ENCODE measurements at regions of chr9 and their contacts with region 1.

Region 1: GRCh38 chr9:131491001-131491710 is 11.6 kb upstream of the POMT1 start:
- DNase-seq: no peak
- ATAC-seq: no peak
- H3K4me3 ChIP-seq: no peak overlapping the region
- H3K27ac ChIP-seq: no peak overlapping the region
- H3K4me1 ChIP-seq: no peaks in the 10 kb centered on the region
- H3K27me3 ChIP-seq: no peaks in the 10 kb centered on the region
- CTCF ChIP-seq: no peak
- EP300 ChIP-seq: no peak
- POLR2A ChIP-seq: no peak
- RAD21 ChIP-seq: no peak

Region 2: GRCh38 chr9:130927995-130928900 is 562.9 kb before region 1 on chr9:
- CTCF ChIA-PET with region 1: no interaction called
- POLR2A ChIA-PET with region 1: no interaction called
- in situ Hi-C with region 1: no loop called
- intact Hi-C with region 1: no loop called
- DNase-seq: peak in 3 of 4 experiments; percentile 64 to 73 (median 66)
- ATAC-seq: no peak
- H3K4me3 ChIP-seq: no peak overlapping the region
- H3K27ac ChIP-seq: no peak overlapping the region
- H3K4me1 ChIP-seq: peaks cover 0 to 52% of the 10 kb centered on the region in 2 experiments; a peak in 2 of 5 replicates
- H3K27me3 ChIP-seq: peaks cover 95 to 100% of the 10 kb centered on the region in 2 experiments
- CTCF ChIP-seq: no peak
- EP300 ChIP-seq: no peak
- POLR2A ChIP-seq: no peak
- RAD21 ChIP-seq: no peak

Region 3: DNA sequence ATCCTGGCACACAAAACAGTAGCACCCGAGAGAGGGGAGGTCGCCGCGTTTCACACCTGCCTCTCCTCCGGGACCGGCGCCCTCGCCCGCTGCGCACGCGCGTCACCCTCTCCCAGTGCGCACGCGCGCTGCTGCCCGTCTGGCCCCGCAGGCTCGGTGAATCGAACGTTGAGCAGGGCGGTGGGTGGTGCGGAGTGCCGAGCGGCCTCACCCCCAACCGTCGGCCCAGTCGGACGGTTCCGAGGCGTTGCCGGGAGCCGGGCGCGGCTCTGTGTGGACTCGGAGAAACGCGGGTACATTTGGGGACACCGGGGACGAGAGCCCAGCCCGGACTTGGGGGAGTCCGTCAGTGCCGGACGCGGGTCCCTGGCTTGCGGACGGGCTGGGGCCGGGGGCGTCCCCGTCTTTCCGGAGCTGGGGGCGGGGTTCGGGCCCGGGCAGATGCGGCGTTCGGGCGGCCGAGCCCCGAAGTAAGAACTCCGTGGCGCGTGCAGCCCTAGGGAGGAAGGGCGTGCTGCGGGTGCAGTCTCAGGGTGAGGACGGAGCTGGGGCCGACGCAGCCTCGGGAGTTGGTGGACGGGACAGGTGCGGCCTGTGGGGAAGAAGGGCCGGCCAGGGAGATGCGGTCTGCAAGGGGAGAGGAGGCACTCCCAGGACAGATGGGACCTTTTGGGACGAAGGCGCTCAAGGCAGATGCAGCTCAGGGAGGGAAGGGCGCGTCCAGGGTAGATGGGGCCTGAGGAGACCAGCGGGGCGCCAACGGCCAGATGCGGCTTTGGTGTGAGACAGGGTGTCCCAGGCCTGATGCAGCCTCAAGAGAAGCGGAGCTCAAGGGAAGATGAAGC is 11.8 kb after region 1 on chr9 and contains the start of gene POMT1:
- CTCF ChIA-PET with region 1: no interaction called
- POLR2A ChIA-PET with region 1: interaction called, 12 read pairs
- in situ Hi-C with region 1: no loop called
- intact Hi-C with region 1: no loop called
- DNase-seq: peak; percentile 93 to 99 (median 98)
- ATAC-seq: peak; percentile 91
- H3K4me3 ChIP-seq: peak within 1 kb of the TSS; percentile 89
- H3K27ac ChIP-seq: peak within 1 kb of the TSS; percentile 62
- H3K4me1 ChIP-seq: peaks cover 4 to 25% of the 10 kb centered on the region in 2 experiments; a peak in 4 of 5 replicates
- H3K27me3 ChIP-seq: no peaks in the 10 kb centered on the region
- CTCF ChIP-seq: 0 out of 6 replicates have a peak, but pooled peaks of 1 of the 3 experiments have one; percentile 0
- EP300 ChIP-seq: no peak
- POLR2A ChIP-seq: peak; percentile 72; the same call in 1 of the 2 replicates
- RAD21 ChIP-seq: no peak
- polyA plus RNA-seq, gene POMT1: 1.8 to 2.1 TPM

Measured in K562 (cell line).